Activated naive CD8-positive, alpha-beta T cell treated with anti-CD3 and anti-CD28 coated beads, Interleukin-2, amount 10 ng/mL, durations not matched to agents 7 days and 5 days (primary cell): ENCODE measurements at regions of chr16 and their contacts with region 1.

Region 1: DNA sequence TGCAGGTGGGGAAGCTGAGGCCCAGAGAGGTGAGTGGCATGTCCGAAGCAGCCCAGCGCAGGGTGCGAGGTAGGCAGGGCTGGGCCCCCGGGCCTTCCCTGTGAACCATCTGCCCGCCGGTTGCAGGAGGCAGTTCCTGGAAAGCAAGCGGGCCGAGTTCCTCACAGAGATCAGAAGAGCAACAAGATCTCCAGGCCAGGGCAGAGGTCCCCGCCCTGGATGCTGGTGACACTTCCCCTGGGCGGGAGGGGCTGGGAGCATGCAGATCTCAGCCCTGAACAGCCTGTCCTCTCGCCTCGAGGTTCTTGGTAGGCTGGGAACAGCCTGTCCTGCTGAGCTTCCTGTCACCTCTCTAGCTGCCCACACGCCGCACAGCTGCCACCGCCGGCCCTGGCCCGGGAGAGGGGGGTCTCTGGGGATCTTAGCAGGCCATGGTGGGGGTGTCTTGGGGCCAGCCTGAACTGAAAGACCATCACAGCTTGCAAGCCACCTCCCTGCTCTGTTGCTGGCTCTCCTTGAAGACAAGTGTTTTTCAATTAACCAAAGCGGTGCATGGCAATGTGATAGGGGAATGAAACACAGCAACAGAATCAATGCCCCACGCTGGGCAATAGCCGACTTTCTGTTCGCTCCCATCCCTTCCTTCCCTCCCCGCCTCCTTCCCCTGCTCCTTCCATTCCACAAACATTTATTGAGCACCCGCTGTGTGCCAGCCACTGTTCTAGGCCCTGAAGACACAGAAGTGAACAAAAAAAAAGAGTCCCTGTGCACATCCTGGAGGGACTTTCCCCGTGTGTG is 31.7 kb downstream of the SOCS1 start:
- DNase-seq: peak; percentile 80
- ATAC-seq: peak; percentile 78
- H3K4me3 Mint-ChIP-seq: peak overlapping the region; percentile 74
- H3K27ac Mint-ChIP-seq: peak overlapping the region; percentile 100
- H3K4me1 Mint-ChIP-seq: peaks cover 60% of the 10 kb centered on the region
- H3K27me3 Mint-ChIP-seq: no peaks in the 10 kb centered on the region

Region 2: DNA sequence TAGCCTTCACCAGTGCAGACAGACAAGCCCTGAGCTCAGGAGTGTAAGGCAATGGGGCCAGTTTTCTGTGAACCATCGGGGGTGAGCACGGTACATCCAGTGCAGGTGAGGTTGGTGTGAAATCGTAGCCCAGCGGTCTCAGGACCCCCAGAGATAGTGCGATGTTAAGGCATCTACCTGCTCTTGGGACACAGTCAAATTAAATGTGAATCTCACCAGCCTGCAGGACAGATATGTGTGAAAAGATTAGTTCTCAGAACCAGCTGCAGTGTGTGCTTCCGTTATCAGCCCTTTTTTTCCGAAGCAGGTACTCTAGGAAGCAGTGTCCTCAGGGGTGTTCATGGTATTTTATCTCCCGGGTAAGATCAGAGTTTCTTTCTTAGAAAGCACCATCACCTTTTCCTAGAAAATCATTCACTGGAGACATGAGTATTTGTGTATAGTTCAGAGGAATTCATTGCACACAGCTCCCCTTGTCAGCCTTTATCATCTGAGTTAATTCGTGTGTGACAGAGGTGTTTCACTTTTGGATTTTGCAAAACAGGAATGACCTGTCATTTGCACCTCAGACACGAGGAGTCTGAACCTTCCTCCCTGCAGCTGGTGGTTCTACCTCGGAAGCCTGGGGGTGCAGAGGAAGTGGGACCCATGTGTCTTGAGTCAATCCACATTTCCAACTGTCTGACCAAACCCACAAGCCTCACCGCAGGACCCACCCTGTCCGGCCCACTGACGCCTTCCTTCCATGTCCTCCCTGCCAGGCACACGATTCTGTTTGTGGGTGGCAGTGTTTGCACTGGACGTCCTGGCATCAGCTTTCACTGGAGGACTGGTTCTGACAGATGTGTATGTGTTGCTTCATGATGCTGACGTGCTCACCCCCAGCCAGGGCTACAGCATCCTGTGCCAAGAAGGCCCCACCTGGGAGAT is 172.2 kb before region 1 on chr16:
- POLR2A ChIA-PET with region 1: interaction called, 19 read pairs
- DNase-seq: peak; percentile 86
- ATAC-seq: peak; percentile 85
- H3K4me3 Mint-ChIP-seq: peak overlapping the region; percentile 43
- H3K27ac Mint-ChIP-seq: peak overlapping the region; percentile 93
- H3K4me1 Mint-ChIP-seq: peaks cover 78% of the 10 kb centered on the region
- H3K27me3 Mint-ChIP-seq: no peaks in the 10 kb centered on the region

Region 3: GRCh38 chr16:11105038-11105903 is 119.0 kb before region 1 on chr16:
- POLR2A ChIA-PET with region 1: interaction called, 10 read pairs
- DNase-seq: no peak
- ATAC-seq: peak; percentile 77
- H3K4me3 Mint-ChIP-seq: peak overlapping the region; percentile 72
- H3K27ac Mint-ChIP-seq: peak overlapping the region; percentile 89
- H3K4me1 Mint-ChIP-seq: peaks cover 71% of the 10 kb centered on the region
- H3K27me3 Mint-ChIP-seq: no peaks in the 10 kb centered on the region

Region 4: DNA sequence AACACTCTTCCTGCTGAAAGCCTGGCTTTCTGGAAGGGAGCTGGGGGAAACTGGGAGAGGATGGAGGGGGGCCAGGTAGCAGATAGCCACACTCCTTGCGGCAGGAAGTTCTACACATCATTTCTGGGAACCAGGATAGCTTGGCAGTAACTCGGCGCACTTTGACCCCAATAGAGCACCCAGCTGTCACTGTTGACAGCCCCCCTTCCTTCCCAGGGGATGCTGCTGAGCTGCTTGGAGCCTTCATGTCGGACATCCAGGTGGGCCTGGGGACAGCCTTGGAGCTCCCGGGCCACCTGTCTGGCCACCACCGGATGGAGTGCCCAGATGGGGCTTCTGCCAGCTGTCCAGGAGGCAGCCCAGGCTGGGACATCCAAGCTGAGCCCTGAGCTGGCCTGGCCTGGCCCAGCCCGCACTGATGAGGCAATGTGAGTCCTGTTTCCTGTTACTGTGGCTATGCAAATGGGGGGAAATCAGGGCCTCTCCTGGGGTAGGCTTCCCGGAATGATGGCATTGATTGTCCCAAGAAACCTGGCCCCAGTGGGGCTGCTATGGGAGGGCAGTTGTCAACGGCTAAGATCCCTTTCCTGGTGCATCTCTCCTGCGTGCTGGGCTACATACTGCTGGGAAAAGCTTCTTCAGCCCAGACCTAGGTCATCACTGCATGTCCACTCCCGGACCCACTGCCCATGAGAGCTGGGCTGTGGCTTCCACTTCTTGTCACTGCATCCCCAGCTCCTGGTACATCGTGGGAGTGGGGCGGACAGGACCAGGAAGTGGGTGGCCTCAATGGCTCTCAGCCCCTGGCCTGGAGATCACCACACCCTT is 18.3 kb before region 1 on chr16:
- POLR2A ChIA-PET with region 1: interaction called, 19 read pairs
- DNase-seq: no peak
- ATAC-seq: no peak
- H3K4me3 Mint-ChIP-seq: peak overlapping the region; percentile 53
- H3K27ac Mint-ChIP-seq: peak overlapping the region; percentile 95
- H3K4me1 Mint-ChIP-seq: peaks cover 31% of the 10 kb centered on the region
- H3K27me3 Mint-ChIP-seq: no peaks in the 10 kb centered on the region

Region 5: DNA sequence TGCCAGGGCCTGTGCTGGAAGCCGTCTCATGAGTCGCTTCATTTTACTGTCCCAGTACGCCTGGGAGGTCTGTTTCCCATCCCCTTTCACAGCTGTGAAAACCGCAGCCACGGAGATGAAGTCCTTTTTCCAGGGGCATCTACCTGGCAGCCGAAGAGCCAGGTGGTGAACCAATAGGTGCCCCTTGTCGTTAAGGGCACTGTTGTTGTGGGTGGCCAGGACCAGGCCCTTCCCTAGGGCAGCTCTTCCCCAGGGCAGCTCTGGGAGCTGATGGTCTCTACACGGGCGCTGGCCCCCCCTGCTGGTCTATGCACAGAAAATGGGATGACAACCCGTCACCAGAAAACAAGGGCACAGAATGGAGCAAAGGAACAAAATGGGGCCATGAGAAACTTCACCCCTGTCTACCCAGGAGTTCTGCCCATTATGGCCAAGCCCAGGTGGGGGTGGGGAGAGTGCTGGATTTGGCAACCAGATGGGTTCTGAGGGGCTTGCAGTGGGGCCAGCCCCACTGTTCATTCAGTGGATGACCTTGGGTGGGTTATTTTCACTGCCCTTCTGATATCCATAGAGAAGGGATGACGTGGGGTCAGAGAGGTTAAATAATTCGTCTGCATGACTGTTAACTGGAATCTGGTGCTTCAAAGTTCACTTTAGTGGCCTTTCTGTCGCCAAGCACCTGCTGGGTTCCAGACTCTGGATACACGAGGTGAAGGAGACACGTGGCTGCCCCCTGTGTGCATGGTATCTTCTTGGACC is 132.5 kb after region 1 on chr16:
- POLR2A ChIA-PET with region 1: interaction called, 11 read pairs
- DNase-seq: peak; percentile 71
- ATAC-seq: no peak
- H3K4me3 Mint-ChIP-seq: peak overlapping the region; percentile 48
- H3K27ac Mint-ChIP-seq: peak overlapping the region; percentile 43
- H3K4me1 Mint-ChIP-seq: peaks cover 79% of the 10 kb centered on the region
- H3K27me3 Mint-ChIP-seq: no peaks in the 10 kb centered on the region